Colonic mucosa (tissue), 4 donors: ENCODE measurements at regions of chr15 and their contacts with region 1.

Region 1: DNA sequence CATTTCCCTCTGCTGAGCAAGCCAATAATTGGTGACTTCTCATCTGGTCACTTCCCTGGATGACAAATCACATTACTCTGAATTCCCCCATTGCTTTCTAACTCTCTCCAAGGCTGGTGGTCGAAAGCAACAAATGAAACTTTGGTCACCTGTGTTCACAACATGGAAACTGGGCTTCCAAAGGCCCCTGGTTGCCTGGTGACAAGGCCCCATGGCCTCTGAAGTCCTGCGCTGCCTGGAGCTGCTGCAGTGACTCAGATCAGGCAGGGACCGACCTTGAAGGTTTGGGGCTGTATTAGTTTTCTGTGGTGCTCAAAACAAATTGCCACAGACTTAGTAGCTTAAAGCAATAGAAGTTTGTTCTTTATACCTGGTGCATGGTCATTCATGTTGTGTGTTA is 345.3 kb downstream of the WDR72 start:
- DNase-seq: no peak
- H3K4me3 ChIP-seq: no peak overlapping the region
- H3K27ac ChIP-seq: no peak overlapping the region
- H3K4me1 ChIP-seq: no peaks in the 10 kb centered on the region
- H3K27me3 ChIP-seq: no peaks in the 10 kb centered on the region
- CTCF ChIP-seq: no peak

Region 2: DNA sequence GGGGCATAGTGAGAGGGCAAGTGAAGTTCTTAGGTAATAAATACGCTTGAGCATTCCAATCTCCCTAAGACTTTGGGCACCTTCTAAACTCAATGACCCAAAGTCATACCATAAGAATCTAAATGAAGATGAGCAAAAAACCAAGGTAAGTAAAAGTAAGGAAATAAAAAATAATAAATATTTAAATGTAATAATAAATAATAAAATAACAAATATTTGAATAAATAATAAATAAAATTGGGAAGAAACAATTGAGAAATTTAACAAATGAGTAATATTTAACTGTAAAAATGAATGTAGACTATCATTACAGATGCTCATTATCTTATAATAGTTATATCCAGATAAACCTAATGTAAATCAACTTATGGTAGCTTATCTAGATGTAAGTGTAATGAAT is 46.4 kb before region 1 on chr15:
- intact Hi-C with region 1: no loop called
- DNase-seq: no peak
- H3K4me3 ChIP-seq: no peak overlapping the region
- H3K27ac ChIP-seq: no peak overlapping the region
- H3K4me1 ChIP-seq: no peaks in the 10 kb centered on the region
- H3K27me3 ChIP-seq: no peaks in the 10 kb centered on the region
- CTCF ChIP-seq: no peak

Region 3: DNA sequence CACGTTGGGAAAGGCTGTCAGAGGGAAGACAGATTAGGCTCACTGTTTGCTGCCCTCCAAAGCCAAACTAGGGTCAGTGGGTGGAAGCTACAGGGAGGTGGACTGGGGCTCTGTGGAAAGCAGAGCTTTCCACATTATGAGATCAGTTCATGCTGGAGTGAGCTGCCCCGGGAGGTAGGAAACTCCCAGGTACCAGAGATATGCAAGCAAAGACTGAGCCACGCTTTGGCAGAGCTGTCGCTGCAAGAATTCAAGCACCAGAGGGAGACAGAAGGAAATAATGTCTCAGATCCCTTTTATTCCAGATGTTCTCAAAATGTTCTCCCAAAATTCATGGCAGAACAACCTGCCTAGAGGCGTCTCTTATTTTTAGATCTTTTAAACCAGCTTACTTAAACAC is 58.7 kb after region 1 on chr15:
- intact Hi-C with region 1: loop called (anchors 10 kb)
- DNase-seq: no peak
- H3K4me3 ChIP-seq: no peak overlapping the region
- H3K27ac ChIP-seq: no peak overlapping the region
- H3K4me1 ChIP-seq: no peaks in the 10 kb centered on the region
- H3K27me3 ChIP-seq: no peaks in the 10 kb centered on the region
- CTCF ChIP-seq: no peak

Region 4: DNA sequence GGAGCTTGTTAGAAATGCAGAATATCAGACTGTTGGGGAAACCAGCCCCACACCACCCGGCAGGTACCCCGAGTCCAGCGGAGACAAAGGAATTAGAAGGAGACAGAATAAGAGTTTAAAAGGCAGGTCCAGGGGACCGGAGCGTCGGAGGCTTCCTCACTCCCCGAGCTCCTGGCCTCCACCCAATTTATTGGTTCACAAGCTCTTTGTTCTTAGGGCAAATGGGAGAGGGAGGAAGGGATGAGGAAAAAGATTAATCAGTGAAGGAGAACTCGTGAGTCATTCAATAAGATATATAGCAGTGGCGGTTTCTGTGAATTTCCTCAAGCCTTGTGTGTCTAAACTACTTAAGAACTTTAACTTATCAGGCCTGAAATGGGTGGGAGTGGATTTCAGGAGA is 377.4 kb after region 1 on chr15:
- intact Hi-C with region 1: no loop called
- DNase-seq: no peak
- H3K4me3 ChIP-seq: no peak overlapping the region
- H3K27ac ChIP-seq: no peak overlapping the region
- H3K4me1 ChIP-seq: no peaks in the 10 kb centered on the region
- H3K27me3 ChIP-seq: no peaks in the 10 kb centered on the region
- CTCF ChIP-seq: no peak